HepG2 (cell line): ENCODE measurements at regions of chr4 and their contacts with region 1.

Region 1: DNA sequence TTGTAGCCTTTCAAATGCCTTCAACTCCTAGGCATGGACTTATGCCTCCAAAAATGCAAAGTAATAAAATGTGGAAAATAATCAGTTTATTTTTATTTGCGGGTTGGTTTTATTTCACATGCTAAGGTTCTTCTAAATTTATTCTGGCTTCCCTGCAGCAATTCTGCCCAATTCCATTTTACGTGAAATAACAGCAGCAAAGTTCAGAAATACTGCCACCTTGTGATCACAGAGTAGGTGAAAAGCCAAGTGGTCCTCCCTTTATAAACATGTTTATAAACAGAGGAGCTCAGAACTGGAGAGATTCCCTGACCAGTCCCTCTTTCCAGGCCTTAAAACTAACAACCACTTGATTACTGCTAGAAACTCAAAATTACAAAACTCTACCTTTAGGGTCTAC is 14.7 kb upstream of the DCHS2 start:
- DNase-seq: peak; percentile 27
- ATAC-seq: peak; percentile 65
- H3K4me3 ChIP-seq: no peak overlapping the region
- H3K27ac ChIP-seq: no peak overlapping the region
- H3K4me1 ChIP-seq: no peaks in the 10 kb centered on the region
- H3K27me3 ChIP-seq: no peaks in the 10 kb centered on the region; a peak in 2 of 5 replicates
- CTCF ChIP-seq: peak; percentile 63
- EP300 ChIP-seq: no peak
- POLR2A ChIP-seq: no peak
- RAD21 ChIP-seq: peak; percentile 36; the same call in 1 of the 2 replicates

Region 2: GRCh38 chr4:154329268-154329868 is 176.9 kb before region 1 on chr4:
- CTCF ChIA-PET with region 1: interaction called, 3 read pairs
- POLR2A ChIA-PET with region 1: no interaction called
- in situ Hi-C with region 1: no loop called
- intact Hi-C with region 1: loop called (anchors 2 kb)
- DNase-seq: peak; percentile 3
- ATAC-seq: peak; percentile 32; the same call in 1 of the 3 replicates
- H3K4me3 ChIP-seq: no peak overlapping the region
- H3K27ac ChIP-seq: no peak overlapping the region
- H3K4me1 ChIP-seq: no peaks in the 10 kb centered on the region
- H3K27me3 ChIP-seq: peaks cover 0 to 8% of the 10 kb centered on the region in 2 experiments; a peak in 1 of 5 replicates
- CTCF ChIP-seq: peak; percentile 41
- EP300 ChIP-seq: no peak
- POLR2A ChIP-seq: no peak
- RAD21 ChIP-seq: no peak

Region 3: DNA sequence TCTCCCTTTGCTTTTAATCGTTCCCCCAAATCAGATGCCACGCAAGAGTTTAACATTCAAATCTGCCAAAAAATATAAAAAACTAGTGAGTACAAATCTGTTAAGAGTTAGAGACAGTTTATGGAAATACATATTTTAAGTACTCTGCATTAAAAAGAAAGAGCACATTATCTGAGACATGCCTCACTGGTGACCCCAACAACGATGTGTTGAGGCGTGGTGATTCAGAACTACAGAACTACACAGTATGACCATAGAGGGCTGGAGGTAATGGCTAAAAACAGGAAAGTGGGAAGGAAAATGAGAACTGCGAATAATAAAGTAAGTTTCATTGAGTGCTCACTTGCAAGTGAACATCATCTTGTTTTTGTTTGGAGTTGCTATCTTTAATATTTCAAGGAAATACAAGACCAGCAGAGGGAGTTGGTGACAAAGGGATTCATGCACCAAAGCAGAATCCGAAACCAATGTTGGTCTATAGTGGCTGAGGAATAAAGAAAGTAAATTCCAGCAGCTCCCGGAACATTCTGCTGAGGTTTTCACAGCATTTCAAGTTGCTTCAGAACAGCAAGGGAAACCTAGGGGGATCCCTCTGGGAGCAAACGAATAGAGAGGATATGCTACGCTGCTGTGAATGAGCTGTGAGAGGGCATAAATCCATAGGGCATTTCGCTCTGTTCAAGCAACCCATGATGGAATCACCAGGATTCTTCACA is 106.8 kb before region 1 on chr4:
- CTCF ChIA-PET with region 1: interaction called, 5 read pairs
- POLR2A ChIA-PET with region 1: no interaction called
- in situ Hi-C with region 1: loop called (anchors 5 kb)
- intact Hi-C with region 1: no loop called
- DNase-seq: peak; percentile 10
- ATAC-seq: peak; percentile 69
- H3K4me3 ChIP-seq: no peak overlapping the region
- H3K27ac ChIP-seq: no peak overlapping the region
- H3K4me1 ChIP-seq: no peaks in the 10 kb centered on the region
- H3K27me3 ChIP-seq: peaks cover 0 to 3% of the 10 kb centered on the region in 2 experiments; a peak in 1 of 5 replicates
- CTCF ChIP-seq: peak; percentile 53
- EP300 ChIP-seq: no peak
- POLR2A ChIP-seq: no peak
- RAD21 ChIP-seq: 0 out of 2 replicates have a peak, but pooled peaks have one; percentile 28

Region 4: GRCh38 chr4:154416190-154416547 is 90.1 kb before region 1 on chr4:
- CTCF ChIA-PET with region 1: no interaction called
- POLR2A ChIA-PET with region 1: no interaction called
- in situ Hi-C with region 1: no loop called
- intact Hi-C with region 1: loop called (anchors 5 kb)
- DNase-seq: peak; percentile 10
- ATAC-seq: peak; percentile 84
- H3K4me3 ChIP-seq: peak overlapping the region; percentile 42 to 67 (median 50); a peak in 5 of 6 replicates
- H3K27ac ChIP-seq: no peak overlapping the region
- H3K4me1 ChIP-seq: peaks cover 12% of the 10 kb centered on the region
- H3K27me3 ChIP-seq: peaks cover 0 to 21% of the 10 kb centered on the region in 2 experiments; a peak in 3 of 5 replicates
- CTCF ChIP-seq: peak; percentile 55
- EP300 ChIP-seq: no peak
- POLR2A ChIP-seq: no peak
- RAD21 ChIP-seq: no peak